Endothelial cell of umbilical vein (primary cell): ENCODE measurements at regions of chr2 and their contacts with region 1.

Region 1: DNA sequence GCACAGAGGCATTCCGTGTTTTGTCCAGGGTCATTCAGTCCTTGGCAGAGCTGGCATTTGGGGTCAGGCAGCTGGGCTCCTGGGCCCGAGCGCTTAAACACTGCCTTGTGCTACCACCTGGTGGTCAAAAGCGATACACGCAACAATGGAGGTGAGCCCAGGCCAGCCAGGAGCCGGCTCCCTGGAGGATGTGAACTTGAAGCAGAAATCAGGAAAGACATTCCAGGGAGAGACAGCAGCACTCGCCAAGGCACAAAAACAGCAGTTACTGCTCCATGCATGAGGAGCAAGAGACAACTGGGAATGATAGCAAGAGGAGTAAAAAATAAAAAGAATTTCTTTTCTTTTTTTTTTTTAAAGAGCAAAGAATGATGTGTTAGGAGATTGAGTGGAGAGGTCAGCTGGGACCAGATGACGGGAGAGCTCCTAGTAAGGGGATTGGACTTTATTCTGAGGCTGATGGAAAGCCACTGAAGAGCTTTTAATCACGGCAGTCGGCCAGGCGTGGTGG is 20.7 kb downstream of the SCYGR8 start:
- DNase-seq: peak; percentile 85
- H3K4me3 ChIP-seq: no peak overlapping the region
- H3K27ac ChIP-seq: no peak overlapping the region
- H3K4me1 ChIP-seq: peaks cover 7% of the 10 kb centered on the region
- H3K27me3 ChIP-seq: no peaks in the 10 kb centered on the region
- CTCF ChIP-seq: peak; percentile 75 to 79
- POLR2A ChIP-seq: no peak

Region 2: DNA sequence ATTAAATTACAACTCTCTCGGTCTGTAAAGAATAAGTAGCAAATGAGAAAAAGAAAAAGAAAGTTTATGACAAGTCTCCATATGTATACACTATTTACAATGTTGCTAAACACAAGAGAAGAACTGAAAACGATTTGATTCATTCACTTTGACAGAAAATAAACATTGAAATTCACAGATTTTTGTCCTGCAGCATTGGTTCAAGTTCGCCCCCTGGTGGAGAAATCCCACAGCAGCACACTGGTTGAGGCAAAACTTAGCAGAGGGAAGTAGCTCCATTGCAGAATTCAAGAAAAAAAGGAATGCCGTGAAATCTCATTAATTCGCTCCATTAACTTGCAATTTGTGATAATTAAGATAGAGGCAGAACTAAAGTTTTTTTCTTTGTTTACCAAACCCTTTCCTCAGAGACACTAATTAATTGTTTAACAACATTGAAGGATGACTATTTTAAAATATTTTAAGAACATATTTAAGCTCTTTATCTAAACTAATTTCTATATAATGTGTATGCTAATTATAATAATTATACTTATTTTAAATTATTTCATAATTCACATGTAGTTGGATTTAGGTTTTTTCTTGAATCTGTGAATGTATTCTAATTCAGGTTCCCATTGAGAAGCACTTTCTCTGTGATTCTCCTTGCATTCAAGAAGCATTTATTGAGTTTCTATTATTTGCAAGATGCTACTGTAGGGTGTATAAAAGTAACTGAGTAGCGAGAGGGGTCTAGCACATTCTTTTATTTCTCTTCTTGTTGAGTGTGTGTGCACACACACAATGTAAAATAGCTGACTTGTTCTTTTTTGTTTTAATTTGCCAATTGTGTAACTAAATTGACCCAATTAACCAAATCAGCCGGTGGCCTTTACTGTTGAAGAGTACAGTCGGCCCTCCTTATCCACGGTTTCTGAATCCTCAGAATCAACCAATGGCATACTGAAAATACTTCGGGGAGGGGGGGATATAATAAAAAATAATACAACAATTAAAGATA is 527.9 kb before region 1 on chr2:
- CTCF ChIA-PET with region 1: interaction called, 43 read pairs
- POLR2A ChIA-PET with region 1: no interaction called
- dilution Hi-C with region 1: no loop called
- intact Hi-C with region 1: loop called (anchors 1 kb)
- DNase-seq: peak; percentile 62
- H3K4me3 ChIP-seq: no peak overlapping the region
- H3K27ac ChIP-seq: no peak overlapping the region
- H3K4me1 ChIP-seq: no peaks in the 10 kb centered on the region
- H3K27me3 ChIP-seq: no peaks in the 10 kb centered on the region
- CTCF ChIP-seq: peak; percentile 86 to 95
- POLR2A ChIP-seq: no peak

Region 3: GRCh38 chr2:227415538-227416424 is 350.6 kb before region 1 on chr2:
- CTCF ChIA-PET with region 1: interaction called, 11 read pairs
- POLR2A ChIA-PET with region 1: no interaction called
- dilution Hi-C with region 1: no loop called
- intact Hi-C with region 1: no loop called
- DNase-seq: peak; percentile 85
- H3K4me3 ChIP-seq: no peak overlapping the region
- H3K27ac ChIP-seq: peak overlapping the region; percentile 52
- H3K4me1 ChIP-seq: peaks cover 8% of the 10 kb centered on the region
- H3K27me3 ChIP-seq: no peaks in the 10 kb centered on the region
- CTCF ChIP-seq: no peak
- POLR2A ChIP-seq: peak; percentile 51

Region 4: GRCh38 chr2:227655454-227655853 is 111.0 kb before region 1 on chr2:
- CTCF ChIA-PET with region 1: interaction called, 105 read pairs
- POLR2A ChIA-PET with region 1: no interaction called
- dilution Hi-C with region 1: no loop called
- intact Hi-C with region 1: loop called (anchors 1 kb)
- DNase-seq: peak; percentile 44
- H3K4me3 ChIP-seq: no peak overlapping the region
- H3K27ac ChIP-seq: no peak overlapping the region
- H3K4me1 ChIP-seq: no peaks in the 10 kb centered on the region
- H3K27me3 ChIP-seq: peaks cover 0 to 4% of the 10 kb centered on the region in 2 experiments
- CTCF ChIP-seq: no peak
- POLR2A ChIP-seq: no peak

Region 5: DNA sequence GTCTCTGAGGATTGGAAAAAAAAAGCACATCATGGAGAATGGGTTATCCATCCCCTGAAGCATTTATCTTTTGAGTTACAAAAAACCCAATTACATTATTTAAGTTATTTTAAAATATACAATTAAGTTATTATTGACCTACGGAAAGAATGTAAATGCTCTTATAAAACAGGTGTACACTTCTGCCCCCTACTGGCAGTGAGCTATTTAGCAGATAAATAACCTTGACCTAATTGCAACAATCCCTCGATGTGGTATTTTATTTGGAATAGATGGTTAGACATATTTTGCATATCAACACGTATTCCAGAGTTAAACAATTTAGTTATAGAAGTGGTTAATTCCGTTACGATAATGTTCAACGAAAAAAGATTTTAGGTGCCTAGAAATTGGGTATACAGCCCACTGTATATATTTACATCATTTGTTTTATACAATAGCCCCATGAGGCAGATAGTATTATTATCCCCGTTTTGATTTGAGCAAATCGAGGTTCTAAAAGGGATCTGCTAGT is 95.9 kb after region 1 on chr2:
- CTCF ChIA-PET with region 1: interaction called, 69 read pairs
- POLR2A ChIA-PET with region 1: no interaction called
- dilution Hi-C with region 1: no loop called
- intact Hi-C with region 1: loop called (anchors 1 kb)
- DNase-seq: peak; percentile 70
- H3K4me3 ChIP-seq: no peak overlapping the region
- H3K27ac ChIP-seq: peak overlapping the region; percentile 75
- H3K4me1 ChIP-seq: peaks cover 23% of the 10 kb centered on the region
- H3K27me3 ChIP-seq: no peaks in the 10 kb centered on the region
- CTCF ChIP-seq: peak; percentile 46 to 54
- POLR2A ChIP-seq: no peak